Panc1 (cell line): ENCODE measurements at regions of chr11 and their contacts with region 1.

Region 1: GRCh38 chr11:34357701-34358257 is at the start of gene ABTB2:
- DNase-seq: peak; percentile 81
- ATAC-seq: peak; percentile 86
- H3K4me3 ChIP-seq: peak within 1 kb of the TSS; percentile 80 to 89
- H3K27ac ChIP-seq: peak within 1 kb of the TSS; percentile 86
- H3K4me1 ChIP-seq: peaks cover 27% of the 10 kb centered on the region
- H3K27me3 ChIP-seq: no peaks in the 10 kb centered on the region
- CTCF ChIP-seq: no peak
- total RNA-seq, gene ABTB2: 22.7 TPM

Region 2: GRCh38 chr11:33996498-33997454 is 361.0 kb before region 1 on chr11:
- CTCF ChIA-PET with region 1: no interaction called
- POLR2A ChIA-PET with region 1: no interaction called
- in situ Hi-C with region 1: no loop called
- intact Hi-C with region 1: loop called (anchors 5 kb)
- DNase-seq: peak; percentile 54
- ATAC-seq: peak; percentile 99
- H3K4me3 ChIP-seq: peak overlapping the region; percentile 10 to 44; a peak in 2 of 4 replicates
- H3K27ac ChIP-seq: no peak overlapping the region
- H3K4me1 ChIP-seq: peaks cover 8% of the 10 kb centered on the region
- H3K27me3 ChIP-seq: no peaks in the 10 kb centered on the region
- CTCF ChIP-seq: peak; percentile 90

Region 3: DNA sequence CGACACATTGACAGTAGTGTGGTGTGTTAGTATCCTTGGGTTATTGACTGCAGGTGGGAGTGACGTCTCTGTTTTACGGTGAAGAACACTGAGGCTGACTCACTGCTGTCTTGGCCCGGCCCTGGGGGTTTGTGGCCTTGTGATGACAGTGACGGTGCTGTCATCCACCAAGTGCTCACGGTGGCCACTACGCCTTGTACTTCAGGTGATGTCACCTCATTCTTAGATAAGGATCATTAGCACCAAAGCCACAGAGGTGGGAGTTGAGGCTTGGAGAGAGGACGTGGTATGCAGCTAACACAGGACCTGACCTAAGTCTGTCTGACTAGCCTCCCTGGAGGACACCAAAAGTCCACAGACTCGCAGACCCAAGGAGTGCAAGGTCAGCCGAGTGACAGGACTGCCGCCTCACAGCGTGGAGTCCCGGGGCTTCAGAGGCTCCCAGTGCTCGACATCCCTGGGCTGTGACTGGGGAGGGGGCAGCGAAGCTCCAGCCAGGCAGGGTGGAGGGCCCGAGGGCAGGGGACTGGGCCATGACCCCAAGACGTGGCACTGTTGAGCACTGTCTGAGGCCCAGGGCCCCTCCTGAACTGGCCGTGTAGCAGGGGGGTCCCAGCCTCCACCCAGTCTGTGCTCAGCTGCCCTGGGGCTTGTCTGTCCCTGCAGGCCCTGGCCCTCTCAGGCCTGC is 195.8 kb before region 1 on chr11:
- CTCF ChIA-PET with region 1: interaction called, 3 read pairs
- POLR2A ChIA-PET with region 1: interaction called, 10 read pairs
- in situ Hi-C with region 1: no loop called
- intact Hi-C with region 1: no loop called
- DNase-seq: no peak
- ATAC-seq: no peak
- H3K4me3 ChIP-seq: no peak overlapping the region
- H3K27ac ChIP-seq: no peak overlapping the region
- H3K4me1 ChIP-seq: no peaks in the 10 kb centered on the region
- H3K27me3 ChIP-seq: no peaks in the 10 kb centered on the region
- CTCF ChIP-seq: no peak

Region 4: GRCh38 chr11:34250732-34251639 is 106.8 kb before region 1 on chr11:
- CTCF ChIA-PET with region 1: interaction called, 3 read pairs
- POLR2A ChIA-PET with region 1: interaction called, 12 read pairs
- in situ Hi-C with region 1: no loop called
- intact Hi-C with region 1: no loop called
- DNase-seq: peak; percentile 74
- ATAC-seq: peak; percentile 82
- H3K4me3 ChIP-seq: peak overlapping the region; percentile 16 to 48; a peak in 3 of 4 replicates
- H3K27ac ChIP-seq: peak overlapping the region; percentile 54
- H3K4me1 ChIP-seq: peaks cover 63% of the 10 kb centered on the region
- H3K27me3 ChIP-seq: no peaks in the 10 kb centered on the region
- CTCF ChIP-seq: no peak

Region 5: DNA sequence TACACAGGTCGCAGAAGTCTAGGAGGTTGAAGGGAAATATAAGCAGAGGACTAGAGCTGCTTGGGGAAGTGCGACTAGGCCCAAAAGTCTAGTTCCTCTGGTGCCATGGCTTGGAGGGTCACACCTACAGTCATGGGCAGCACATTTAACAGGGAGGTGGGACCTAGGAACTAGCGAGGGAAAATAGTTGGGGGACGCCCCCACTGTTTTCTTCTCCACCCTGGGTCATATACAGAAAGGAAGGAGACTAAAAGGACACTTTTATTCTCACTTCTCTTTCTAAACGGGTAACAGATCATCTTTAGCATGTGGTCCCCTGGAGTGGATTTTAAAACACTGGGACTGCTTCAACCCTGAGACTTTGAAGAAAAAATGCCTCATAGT is 541.8 kb after region 1 on chr11:
- CTCF ChIA-PET with region 1: no interaction called
- POLR2A ChIA-PET with region 1: no interaction called
- in situ Hi-C with region 1: no loop called
- intact Hi-C with region 1: loop called (anchors 5 kb)
- DNase-seq: no peak
- ATAC-seq: peak; percentile 47; the same call in 1 of the 2 replicates
- H3K4me3 ChIP-seq: no peak overlapping the region
- H3K27ac ChIP-seq: peak overlapping the region; percentile 76
- H3K4me1 ChIP-seq: peaks cover 14% of the 10 kb centered on the region
- H3K27me3 ChIP-seq: no peaks in the 10 kb centered on the region
- CTCF ChIP-seq: no peak